GM12878 (cell line): ENCODE measurements at regions of chr15 and their contacts with region 1.

Region 1: GRCh38 chr15:63048115-63048775 is 5.7 kb downstream of the TPM1 start:
- DNase-seq: peak; percentile 28
- ATAC-seq: peak; percentile 94
- H3K4me3 ChIP-seq: peak overlapping the region; percentile 75
- H3K27ac ChIP-seq: no peak overlapping the region
- H3K4me1 ChIP-seq: peaks cover 6% of the 10 kb centered on the region; the same call in 1 of the 2 replicates
- H3K27me3 ChIP-seq: peaks cover 9 to 25% of the 10 kb centered on the region in 2 experiments
- CTCF ChIP-seq: peak; percentile 86 to 98 (median 91)
- EP300 ChIP-seq: no peak
- POLR2A ChIP-seq: peak; percentile 34; the same call in 1 of the 2 replicates
- RAD21 ChIP-seq: peak; percentile 64

Region 2: DNA sequence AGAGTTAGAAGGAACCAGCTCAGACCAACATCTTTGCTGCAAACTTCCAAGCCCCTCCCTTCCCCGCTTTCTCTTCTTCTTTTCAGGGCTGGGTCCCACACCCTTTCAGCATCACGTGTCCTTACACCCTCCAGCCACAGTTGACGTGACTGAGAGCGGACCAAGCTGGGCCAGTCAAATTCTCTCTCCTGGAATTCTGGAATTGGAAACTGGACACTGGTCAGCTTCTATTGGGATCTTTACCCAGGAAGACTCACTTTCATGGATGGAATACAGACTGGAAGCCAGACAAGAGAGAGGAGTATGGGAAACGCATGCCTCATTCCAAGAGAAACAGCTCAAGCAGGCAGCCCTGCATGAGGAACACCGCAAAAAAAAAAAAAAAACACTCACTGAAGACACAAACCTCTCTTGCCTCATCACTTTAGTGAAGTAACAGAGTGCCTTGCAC is 18.1 kb before region 1 on chr15:
- CTCF ChIA-PET with region 1: interaction called, 14 read pairs
- POLR2A ChIA-PET with region 1: no interaction called
- RAD21 ChIA-PET with region 1: no interaction called
- SMC1A ChIA-PET with region 1: no interaction called
- in situ Hi-C with region 1: no loop called
- intact Hi-C with region 1: no loop called
- DNase-seq: no peak
- ATAC-seq: no peak
- H3K4me3 ChIP-seq: no peak overlapping the region
- H3K27ac ChIP-seq: no peak overlapping the region
- H3K4me1 ChIP-seq: no peaks in the 10 kb centered on the region
- H3K27me3 ChIP-seq: peaks cover 0 to 4% of the 10 kb centered on the region in 2 experiments; a peak in 1 of 4 replicates
- CTCF ChIP-seq: no peak
- EP300 ChIP-seq: no peak
- POLR2A ChIP-seq: no peak
- RAD21 ChIP-seq: no peak

Region 3: GRCh38 chr15:63065262-63066221 is 17.3 kb after region 1 on chr15:
- CTCF ChIA-PET with region 1: interaction called, 68 read pairs
- POLR2A ChIA-PET with region 1: no interaction called
- RAD21 ChIA-PET with region 1: interaction called, 4 read pairs
- SMC1A ChIA-PET with region 1: interaction called, 5 read pairs
- in situ Hi-C with region 1: no loop called
- intact Hi-C with region 1: no loop called
- DNase-seq: no peak
- ATAC-seq: no peak
- H3K4me3 ChIP-seq: no peak overlapping the region
- H3K27ac ChIP-seq: no peak overlapping the region
- H3K4me1 ChIP-seq: no peaks in the 10 kb centered on the region
- H3K27me3 ChIP-seq: no peaks in the 10 kb centered on the region
- CTCF ChIP-seq: no peak
- EP300 ChIP-seq: no peak
- POLR2A ChIP-seq: no peak
- RAD21 ChIP-seq: no peak

Region 4: DNA sequence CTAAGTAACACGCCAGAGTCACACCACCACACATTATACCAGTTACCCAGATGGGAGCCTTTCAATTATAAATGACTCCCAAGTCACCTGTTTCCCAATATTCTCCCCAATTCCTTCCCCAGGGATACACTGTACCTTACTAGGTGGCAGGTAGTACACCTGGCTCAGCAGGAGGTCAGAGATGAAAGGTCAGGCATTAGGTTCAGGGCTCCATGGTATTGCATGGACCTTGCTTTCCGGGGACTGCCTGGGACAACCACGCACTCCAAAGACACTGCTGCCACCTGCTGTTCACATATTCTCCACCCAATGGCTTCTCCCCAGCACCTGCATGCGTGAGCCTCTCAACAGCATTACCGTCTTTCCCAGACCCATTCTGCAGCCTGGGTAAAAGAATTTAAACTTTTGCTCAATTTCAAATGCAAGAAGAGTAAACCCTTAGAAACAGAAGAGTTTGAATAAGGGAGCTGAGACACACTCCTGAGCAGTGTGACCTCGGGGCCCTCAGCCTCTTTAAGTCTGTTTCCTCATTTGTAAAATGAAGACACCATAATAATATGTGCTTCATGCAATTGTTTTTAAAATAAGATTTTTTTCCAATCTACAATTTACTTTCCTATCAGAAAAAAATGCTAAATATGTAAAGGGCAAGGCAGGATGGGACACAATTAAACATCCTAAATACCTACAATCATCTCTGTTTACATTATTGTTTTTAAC is 45.4 kb after region 1 on chr15:
- CTCF ChIA-PET with region 1: interaction called, 107 read pairs
- POLR2A ChIA-PET with region 1: interaction called, 3 read pairs
- RAD21 ChIA-PET with region 1: interaction called, 39 read pairs
- SMC1A ChIA-PET with region 1: interaction called, 27 read pairs
- in situ Hi-C with region 1: no loop called
- intact Hi-C with region 1: loop called (anchors 1 kb)
- DNase-seq: peak; percentile 35
- ATAC-seq: peak; percentile 99
- H3K4me3 ChIP-seq: no peak overlapping the region
- H3K27ac ChIP-seq: no peak overlapping the region
- H3K4me1 ChIP-seq: no peaks in the 10 kb centered on the region
- H3K27me3 ChIP-seq: no peaks in the 10 kb centered on the region; a peak in 2 of 4 replicates
- CTCF ChIP-seq: peak; percentile 83 to 89 (median 84)
- EP300 ChIP-seq: no peak
- POLR2A ChIP-seq: no peak
- RAD21 ChIP-seq: peak; percentile 91

Region 5: GRCh38 chr15:63277038-63277892 is 229.0 kb after region 1 on chr15 and contains the start of gene APH1B:
- CTCF ChIA-PET with region 1: interaction called, 13 read pairs
- POLR2A ChIA-PET with region 1: interaction called, 6 read pairs
- RAD21 ChIA-PET with region 1: interaction called, 6 read pairs
- SMC1A ChIA-PET with region 1: no interaction called
- in situ Hi-C with region 1: no loop called
- intact Hi-C with region 1: loop called (anchors 5 kb)
- DNase-seq: no peak
- ATAC-seq: peak; percentile 94
- H3K4me3 ChIP-seq: peak within 1 kb of the TSS; percentile 94
- H3K27ac ChIP-seq: peak within 1 kb of the TSS; percentile 62
- H3K4me1 ChIP-seq: peaks cover 4% of the 10 kb centered on the region; the same call in 1 of the 2 replicates
- H3K27me3 ChIP-seq: no peaks in the 10 kb centered on the region
- CTCF ChIP-seq: no peak
- EP300 ChIP-seq: no peak
- POLR2A ChIP-seq: peak; percentile 89
- RAD21 ChIP-seq: no peak
- polyA plus RNA-seq, gene APH1B: 12.9 to 17.6 TPM

Region 6: DNA sequence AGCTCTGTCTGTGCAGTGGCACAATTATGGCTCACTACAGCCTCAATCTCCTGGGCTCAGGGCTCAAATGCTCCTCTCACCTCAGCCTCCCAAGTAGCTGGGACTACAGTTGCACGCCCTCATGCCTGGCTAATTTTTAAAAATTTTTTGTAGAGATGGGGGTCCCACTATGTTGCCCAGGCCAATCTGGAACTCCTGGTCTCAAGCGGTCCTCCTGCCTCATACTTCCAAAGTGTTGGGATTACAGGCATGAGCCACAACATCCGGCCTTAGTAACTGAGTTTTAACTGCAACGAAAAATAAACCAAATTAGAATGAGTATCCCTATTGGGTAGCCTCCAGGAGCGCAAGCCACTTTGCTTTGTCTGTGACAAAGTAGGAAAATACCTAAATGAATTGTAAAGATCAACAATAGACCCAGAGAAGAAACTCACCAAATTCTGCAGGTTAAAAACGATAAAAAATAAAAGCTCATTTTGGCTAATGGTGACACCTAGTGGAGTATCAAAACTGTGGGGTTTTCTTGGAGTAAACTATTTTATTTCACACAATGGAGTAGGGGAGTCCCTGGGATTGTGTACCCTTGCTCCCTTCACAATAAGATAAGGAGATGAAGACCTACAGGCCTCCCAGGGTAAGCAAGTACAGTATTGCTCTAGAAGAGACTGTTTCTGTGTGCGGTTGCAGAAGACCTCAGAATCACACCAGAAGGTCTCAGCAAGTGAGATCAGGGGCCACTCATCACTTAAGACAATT is 354.4 kb after region 1 on chr15:
- CTCF ChIA-PET with region 1: interaction called, 19 read pairs
- POLR2A ChIA-PET with region 1: no interaction called
- RAD21 ChIA-PET with region 1: interaction called, 12 read pairs
- SMC1A ChIA-PET with region 1: interaction called, 13 read pairs
- in situ Hi-C with region 1: loop called (anchors 5 kb)
- intact Hi-C with region 1: loop called (anchors 2 kb)
- DNase-seq: no peak
- ATAC-seq: peak; percentile 73
- H3K4me3 ChIP-seq: no peak overlapping the region
- H3K27ac ChIP-seq: no peak overlapping the region
- H3K4me1 ChIP-seq: no peaks in the 10 kb centered on the region
- H3K27me3 ChIP-seq: no peaks in the 10 kb centered on the region
- CTCF ChIP-seq: peak; percentile 44 to 60 (median 56); a peak in 5 of 6 replicates
- EP300 ChIP-seq: no peak
- POLR2A ChIP-seq: no peak
- RAD21 ChIP-seq: peak; percentile 82